Calu3 (cell line): ENCODE measurements at regions of chr10 and their contacts with region 1.

Region 1: DNA sequence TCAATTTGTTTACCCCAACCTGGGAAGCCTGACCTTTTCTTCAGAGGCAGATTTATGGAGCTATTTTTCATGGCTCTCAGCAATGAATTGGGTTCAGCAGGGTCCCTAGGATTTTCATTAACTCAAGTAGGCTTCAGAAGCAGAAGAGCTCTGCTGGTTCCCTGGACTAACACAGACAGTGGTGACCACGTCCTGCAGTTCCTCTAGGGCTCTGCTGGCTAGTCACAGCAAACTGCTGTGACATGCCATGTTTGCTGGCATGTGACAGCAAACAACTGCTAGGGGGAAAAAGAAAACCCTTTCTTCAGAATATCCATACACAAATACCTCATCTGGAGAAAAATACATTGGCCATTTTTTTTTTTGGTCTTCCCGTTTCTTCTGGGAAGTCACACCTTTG is 13.2 kb downstream of the BAMBI start:
- DNase-seq: no peak
- H3K4me3 Mint-ChIP-seq: no peak overlapping the region
- H3K27ac Mint-ChIP-seq: no peak overlapping the region
- H3K4me1 Mint-ChIP-seq: peaks cover 18% of the 10 kb centered on the region
- H3K27me3 Mint-ChIP-seq: no peaks in the 10 kb centered on the region
- CTCF ChIP-seq: no peak

Region 2: DNA sequence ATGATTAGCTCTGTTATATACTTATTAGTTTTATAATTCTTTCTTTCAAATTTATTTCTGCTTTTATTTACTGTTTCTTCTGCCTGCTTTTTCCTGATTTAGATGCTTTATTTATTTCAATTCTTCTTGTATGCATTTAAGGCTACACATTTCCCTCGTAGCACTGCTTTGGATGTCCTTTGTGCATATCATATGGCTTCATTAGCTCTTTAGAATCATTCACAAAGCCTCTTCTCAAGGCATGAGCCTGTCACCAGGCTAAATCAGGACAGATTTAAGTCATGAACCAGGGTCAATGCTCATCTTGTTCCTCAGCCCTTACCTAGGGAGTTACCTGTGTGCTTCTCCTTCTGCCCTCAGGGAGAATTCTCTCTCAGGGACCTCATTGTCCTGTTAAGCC is 43.1 kb after region 1 on chr10:
- CTCF ChIA-PET with region 1: interaction called, 11 read pairs
- intact Hi-C with region 1: no loop called
- DNase-seq: no peak
- H3K4me3 Mint-ChIP-seq: no peak overlapping the region
- H3K27ac Mint-ChIP-seq: no peak overlapping the region
- H3K4me1 Mint-ChIP-seq: no peaks in the 10 kb centered on the region
- H3K27me3 Mint-ChIP-seq: peaks cover 17% of the 10 kb centered on the region
- CTCF ChIP-seq: no peak